ENCODE measurements at regions of chr17 and their contacts with region 1.

Region 1: GRCh38 chr17:79974566-79975497 is 60.8 kb downstream of the TBC1D16 start:
- DNase-seq: no peak
- H3K4me3 ChIP-seq: no peak overlapping the region
- CTCF ChIP-seq: peak; percentile 22

Region 2: GRCh38 chr17:79796763-79797491 is 177.9 kb before region 1 on chr17 and contains the start of gene CBX8:
- in situ Hi-C with region 1: loop called (anchors 5 kb)
- DNase-seq: peak; percentile 97
- H3K4me3 ChIP-seq: peak within 1 kb of the TSS; percentile 74
- CTCF ChIP-seq: no peak

Region 3: GRCh38 chr17:79892459-79892858 is 82.4 kb before region 1 on chr17:
- in situ Hi-C with region 1: loop called (anchors 5 kb)
- DNase-seq: no peak
- H3K4me3 ChIP-seq: no peak overlapping the region
- CTCF ChIP-seq: no peak

Region 4: GRCh38 chr17:79937391-79938335 is 37.2 kb before region 1 on chr17:
- in situ Hi-C with region 1: loop called (anchors 5 kb)
- DNase-seq: no peak
- H3K4me3 ChIP-seq: no peak overlapping the region
- CTCF ChIP-seq: no peak

Region 5: GRCh38 chr17:80082403-80083135 is 107.7 kb after region 1 on chr17:
- in situ Hi-C with region 1: no loop called
- DNase-seq: peak; percentile 64
- H3K4me3 ChIP-seq: no peak overlapping the region
- CTCF ChIP-seq: peak; percentile 76